Heart right ventricle (tissue), 16 donors: ENCODE measurements at regions of chr15 and their contacts with region 1.

Region 1: GRCh38 chr15:27509014-27509413 is 538.0 kb downstream of the GABRG3 start:
- DNase-seq: no peak
- ATAC-seq: no peak
- H3K4me3 ChIP-seq: no peak overlapping the region
- H3K27ac ChIP-seq: no peak overlapping the region
- H3K4me1 ChIP-seq: no peaks in the 10 kb centered on the region
- H3K27me3 ChIP-seq: no peaks in the 10 kb centered on the region
- CTCF ChIP-seq: no peak

Region 2: DNA sequence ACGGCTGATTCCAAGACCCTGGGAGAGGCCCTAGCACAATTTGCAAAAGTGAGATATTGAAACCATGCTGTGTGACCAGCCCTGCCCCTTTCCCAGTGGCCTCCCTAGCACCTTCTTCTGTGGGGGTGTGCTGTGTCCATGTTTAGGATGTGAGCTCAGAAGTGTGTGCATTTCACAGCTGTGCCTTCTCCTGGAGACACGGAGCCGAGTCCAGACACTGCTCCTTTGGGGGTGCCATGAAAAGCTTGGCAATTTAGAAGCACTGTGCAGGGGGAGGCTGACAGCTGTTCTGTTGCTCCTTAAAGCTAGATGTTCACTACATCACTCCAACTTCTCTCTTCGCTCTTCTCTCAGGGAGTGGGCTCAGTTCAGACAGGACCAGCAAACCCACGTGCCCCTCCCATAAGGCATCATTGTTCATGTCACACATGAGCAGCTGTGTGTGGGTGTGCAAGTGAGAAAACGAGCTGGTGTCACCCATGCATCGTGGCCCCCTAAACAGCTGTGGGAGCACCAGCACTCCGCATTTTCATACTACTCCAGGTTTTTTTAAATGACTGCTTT is 45.4 kb before region 1 on chr15:
- intact Hi-C with region 1: loop called in 1 of 10 experiments (anchors 5 kb)
- DNase-seq: no peak
- ATAC-seq: no peak
- H3K4me3 ChIP-seq: no peak overlapping the region
- H3K27ac ChIP-seq: no peak overlapping the region
- H3K4me1 ChIP-seq: no peaks in the 10 kb centered on the region
- H3K27me3 ChIP-seq: no peaks in the 10 kb centered on the region
- CTCF ChIP-seq: no peak